H1 (cell line): ENCODE measurements at regions of chr11 and their contacts with region 1.

Region 1: GRCh38 chr11:13668102-13668956 is at the start of gene FAR1:
- DNase-seq: peak; percentile 93
- H3K4me3 ChIP-seq: peak within 1 kb of the TSS; percentile 77 to 93 (median 86)
- H3K27ac ChIP-seq: peak within 1 kb of the TSS; percentile 56; the same call in 1 of the 2 replicates
- H3K4me1 ChIP-seq: peaks cover 0 to 6% (median 0%) of the 10 kb centered on the region in 4 experiments; a peak in 3 of 7 replicates
- H3K27me3 ChIP-seq: no peaks in the 10 kb centered on the region
- CTCF ChIP-seq: peak; percentile 41 to 57 (median 53)
- EP300 ChIP-seq: peak; percentile 26 to 30; a peak in 2 of 3 replicates
- POLR2A ChIP-seq: no peak; a peak in 1 of 3 replicates
- RAD21 ChIP-seq: peak; percentile 31 to 43; a peak in 2 of 4 replicates
- total RNA-seq, gene FAR1: 65.1 and 68.5 TPM in 2 replicates

Region 2: DNA sequence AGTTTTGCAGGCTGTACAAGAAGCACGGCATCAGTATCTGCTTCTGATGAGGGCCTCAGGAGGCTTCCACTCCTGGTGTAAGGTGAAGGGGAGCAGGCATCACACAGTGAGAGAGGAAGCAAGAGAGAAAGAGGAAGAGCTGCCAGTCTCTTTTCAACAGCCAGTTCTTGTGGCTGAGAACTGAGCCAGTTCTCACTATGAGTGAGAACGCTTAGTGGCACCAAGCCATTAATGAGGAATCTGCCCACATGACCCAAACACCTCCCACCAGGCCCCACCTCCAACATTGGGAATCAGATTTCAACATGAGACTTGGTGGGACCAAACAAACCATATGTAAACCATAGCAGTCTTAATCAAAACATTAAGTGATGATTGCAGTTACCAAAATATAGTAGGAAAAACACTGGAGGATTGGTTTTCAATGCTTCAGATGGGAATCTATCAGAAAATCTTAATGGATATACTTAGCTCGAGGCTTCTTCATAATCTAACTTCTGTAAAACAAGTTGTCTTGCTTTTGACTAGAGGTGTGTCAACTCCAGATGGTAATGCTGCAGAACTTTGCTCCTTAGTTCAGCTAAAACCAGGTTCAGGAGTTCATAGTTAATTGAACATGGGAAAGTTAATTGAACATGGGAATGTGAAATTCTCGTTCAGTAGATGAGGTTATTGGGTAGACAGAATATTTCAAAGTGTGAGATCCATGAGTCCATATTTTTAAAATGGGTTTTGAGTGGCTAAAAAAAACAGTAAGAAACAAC is 12.4 kb after region 1 on chr11:
- CTCF ChIA-PET with region 1: interaction called, 12 read pairs
- POLR2A ChIA-PET with region 1: interaction called, 10 read pairs
- DNase-seq: no peak
- H3K4me3 ChIP-seq: no peak overlapping the region
- H3K27ac ChIP-seq: no peak overlapping the region
- H3K4me1 ChIP-seq: peaks cover 4 to 21% (median 13%) of the 10 kb centered on the region in 4 experiments
- H3K27me3 ChIP-seq: no peaks in the 10 kb centered on the region
- CTCF ChIP-seq: no peak
- EP300 ChIP-seq: no peak
- POLR2A ChIP-seq: no peak
- RAD21 ChIP-seq: no peak

Region 3: GRCh38 chr11:13861411-13861810 is 193.1 kb after region 1 on chr11:
- CTCF ChIA-PET with region 1: no interaction called
- POLR2A ChIA-PET with region 1: no interaction called
- DNase-seq: no peak
- H3K4me3 ChIP-seq: no peak overlapping the region
- H3K27ac ChIP-seq: no peak overlapping the region
- H3K4me1 ChIP-seq: no peaks in the 10 kb centered on the region
- H3K27me3 ChIP-seq: no peaks in the 10 kb centered on the region; a peak in 1 of 7 replicates
- CTCF ChIP-seq: no peak
- EP300 ChIP-seq: no peak
- POLR2A ChIP-seq: no peak
- RAD21 ChIP-seq: no peak